ENCODE measurements at regions of chr11 and their contacts with region 1.

Region 1: DNA sequence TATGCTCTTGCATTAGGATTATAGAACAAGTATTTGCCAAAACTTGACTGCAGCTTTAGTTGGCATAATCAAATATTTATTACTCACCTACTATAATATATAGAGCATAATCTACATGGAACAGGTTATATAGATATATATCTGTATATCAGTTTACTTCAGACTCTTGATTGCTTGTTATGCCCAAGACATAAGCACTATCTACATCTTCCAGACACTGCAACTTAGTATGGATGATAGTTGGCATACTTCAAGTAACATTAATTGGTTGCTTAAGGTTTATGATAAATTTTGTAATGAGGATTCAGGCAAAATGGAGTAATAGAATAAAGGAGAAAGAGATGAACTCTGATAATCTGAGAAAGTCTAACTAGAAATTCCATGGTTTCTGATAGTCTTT is 1.0 kb downstream of the CCDC15 start:
- DNase-seq: no peak
- ATAC-seq: no peak
- H3K4me3 ChIP-seq: no peak overlapping the region
- H3K27ac ChIP-seq: no peak overlapping the region
- H3K4me1 ChIP-seq: peaks cover 13% of the 10 kb centered on the region
- H3K27me3 ChIP-seq: no peaks in the 10 kb centered on the region
- CTCF ChIP-seq: no peak
- POLR2A ChIP-seq: no peak

Region 2: DNA sequence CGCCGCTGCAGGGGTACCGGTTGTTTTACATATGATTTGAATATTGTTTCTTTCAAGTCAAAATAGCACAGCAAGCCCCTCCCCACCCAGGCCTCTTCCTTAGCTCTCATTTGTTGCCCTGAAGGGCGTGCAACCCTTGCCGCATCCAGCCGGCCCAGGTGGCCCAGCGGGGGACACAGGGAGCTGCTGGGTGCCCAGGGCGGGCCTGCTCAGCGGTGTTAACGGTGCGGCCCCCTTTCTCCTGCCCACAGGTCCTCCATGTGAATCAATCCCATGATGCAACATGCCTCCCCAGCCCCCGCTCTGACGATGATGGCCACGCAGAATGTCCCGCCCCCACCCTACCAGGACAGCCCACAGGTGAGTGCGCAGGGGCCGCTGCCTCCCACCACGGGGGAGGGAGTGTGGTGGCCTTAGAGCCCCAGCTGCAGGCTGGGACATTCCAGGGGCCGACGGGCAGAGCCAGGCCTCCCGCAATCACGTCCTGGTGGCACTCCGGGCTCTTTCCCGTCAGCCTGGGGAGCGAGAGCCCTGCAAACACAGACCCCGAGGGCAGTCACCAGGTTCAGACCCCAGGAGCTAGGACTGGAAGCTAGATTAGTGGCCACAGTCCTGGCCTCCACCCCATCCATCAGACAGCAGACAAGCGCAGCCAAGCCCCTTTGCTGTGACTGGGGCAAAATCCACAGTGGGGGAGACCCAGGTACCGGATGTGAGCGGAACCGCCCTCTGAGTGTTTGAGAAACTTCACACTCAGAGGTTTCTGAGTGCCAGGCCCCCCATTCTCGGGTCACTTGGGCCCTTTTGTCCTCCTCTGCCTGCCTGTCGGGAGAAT is 396.2 kb after region 1 on chr11:
- intact Hi-C with region 1: loop called (anchors 5 kb)
- DNase-seq: no peak
- ATAC-seq: no peak
- H3K4me3 ChIP-seq: no peak overlapping the region
- H3K27ac ChIP-seq: no peak overlapping the region
- H3K4me1 ChIP-seq: no peaks in the 10 kb centered on the region
- H3K27me3 ChIP-seq: no peaks in the 10 kb centered on the region
- CTCF ChIP-seq: no peak
- POLR2A ChIP-seq: no peak